Caki2 (cell line): ENCODE measurements at regions of chr12 and their contacts with region 1.

Region 1: DNA sequence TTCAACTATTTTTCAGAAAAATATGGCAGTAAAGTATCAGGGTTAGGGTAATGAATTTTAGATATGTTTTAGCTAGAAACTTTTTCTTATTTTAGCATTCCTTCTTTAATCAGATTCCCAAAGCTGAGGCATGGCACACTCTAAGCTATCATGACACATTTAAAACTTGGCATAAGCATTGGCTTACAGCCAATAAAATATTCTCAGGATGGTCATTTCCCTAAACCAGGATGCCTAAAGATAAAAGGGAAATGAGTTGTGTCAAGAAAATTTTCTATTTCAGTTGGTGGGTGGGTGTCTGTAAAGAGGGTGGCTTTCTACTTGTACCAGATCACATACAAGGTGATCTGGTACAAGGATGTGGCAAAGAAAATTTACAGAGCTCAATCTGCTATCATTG is 47.8 kb downstream of the PEBP1 start:
- DNase-seq: no peak

Region 2: DNA sequence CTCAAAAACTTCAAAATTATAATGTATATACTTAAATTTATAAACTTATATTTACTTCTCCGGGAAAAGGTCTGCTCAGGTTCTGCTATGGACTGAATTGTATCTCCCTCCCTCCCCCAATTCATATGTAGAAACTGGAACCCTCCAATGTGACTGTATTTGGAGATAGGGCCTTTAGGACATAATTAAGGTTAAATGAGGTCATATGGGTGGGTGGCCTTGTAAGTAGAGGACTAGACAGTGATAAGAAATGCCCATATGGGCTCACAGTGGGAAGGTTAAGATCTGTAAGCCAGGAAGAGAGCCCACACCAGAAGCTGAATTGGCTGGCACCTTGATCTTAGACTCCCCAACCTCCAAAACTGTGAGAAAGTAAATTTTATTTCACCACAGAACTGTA is 104.5 kb after region 1 on chr12:
- in situ Hi-C with region 1: no loop called
- DNase-seq: no peak

Region 3: GRCh38 chr12:118376089-118377020 is 192.7 kb after region 1 on chr12 and contains the start of gene SUDS3:
- in situ Hi-C with region 1: loop called (anchors 5 kb)
- DNase-seq: peak; percentile 87
- total RNA-seq, gene SUDS3: 21.3 and 39.4 TPM in 2 replicates